H1 (cell line): ENCODE measurements at regions of chr5 and their contacts with region 1.

Region 1: DNA sequence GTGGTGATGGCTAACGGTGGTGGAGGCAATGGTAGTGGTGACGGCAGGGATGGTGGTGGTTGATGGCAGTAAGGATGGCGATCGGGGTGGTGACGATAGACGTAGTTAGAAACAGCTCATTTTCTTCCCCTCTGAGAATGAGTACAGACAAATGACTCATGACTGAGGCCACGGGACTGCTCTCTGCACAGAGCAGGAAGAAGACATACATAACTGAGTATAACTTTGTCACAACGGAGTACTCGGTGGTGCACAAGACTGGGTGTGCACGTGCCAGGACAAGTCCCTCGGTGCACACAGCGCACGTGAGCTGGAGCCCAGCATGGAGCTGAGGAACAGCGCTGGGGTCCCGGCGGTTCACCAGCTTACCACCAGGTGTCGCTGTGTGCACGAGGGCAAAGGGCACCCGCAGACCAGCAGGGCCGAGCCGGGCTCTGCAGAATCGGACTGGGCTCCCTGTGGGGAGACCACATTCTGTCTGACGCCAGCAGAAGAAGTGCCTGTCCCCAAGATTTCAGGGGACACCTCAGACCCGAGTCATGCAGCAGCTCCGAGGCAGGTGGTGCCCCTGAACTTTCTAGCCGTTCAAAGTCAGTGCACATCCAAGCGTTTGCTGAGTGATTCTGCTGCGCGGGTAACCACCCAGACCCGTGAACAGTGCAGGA is 188.6 kb downstream of the FSTL4 start:
- DNase-seq: peak; percentile 53 to 97
- H3K4me3 ChIP-seq: no peak overlapping the region
- H3K27ac ChIP-seq: no peak overlapping the region
- H3K4me1 ChIP-seq: peaks cover 8 to 27% (median 18%) of the 10 kb centered on the region in 4 experiments
- H3K27me3 ChIP-seq: peaks cover 3 to 10% (median 7%) of the 10 kb centered on the region in 4 experiments
- CTCF ChIP-seq: peak; percentile 93 to 95 (median 94)
- EP300 ChIP-seq: no peak
- POLR2A ChIP-seq: no peak
- RAD21 ChIP-seq: peak; percentile 86 to 91

Region 2: DNA sequence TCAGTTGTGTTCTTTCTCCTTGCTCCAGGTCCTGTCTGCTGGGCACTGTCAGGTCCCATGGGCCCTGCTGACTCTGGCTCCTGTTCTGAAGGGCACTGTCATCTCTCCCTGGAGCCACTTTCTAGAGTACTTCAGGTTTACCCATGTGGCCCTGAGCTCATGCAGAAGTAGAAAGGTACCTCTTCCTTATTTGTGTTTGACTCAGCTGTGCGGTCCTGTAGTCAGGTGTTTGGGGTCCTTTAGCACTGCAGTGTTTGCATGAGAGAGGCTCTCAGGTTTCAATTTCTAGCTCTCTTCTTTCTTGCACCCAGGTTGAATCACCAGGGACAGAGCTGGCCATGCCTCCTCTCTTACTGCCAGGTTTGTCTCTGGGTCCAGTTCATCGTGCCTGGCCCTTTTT is 300.5 kb before region 1 on chr5:
- CTCF ChIA-PET with region 1: no interaction called
- POLR2A ChIA-PET with region 1: no interaction called
- DNase-seq: no peak
- H3K4me3 ChIP-seq: no peak overlapping the region
- H3K27ac ChIP-seq: no peak overlapping the region
- H3K4me1 ChIP-seq: no peaks in the 10 kb centered on the region
- H3K27me3 ChIP-seq: peaks cover 0 to 2% (median under 1%) of the 10 kb centered on the region in 4 experiments; a peak in 1 of 7 replicates
- CTCF ChIP-seq: no peak
- EP300 ChIP-seq: no peak
- POLR2A ChIP-seq: no peak
- RAD21 ChIP-seq: no peak

Region 3: DNA sequence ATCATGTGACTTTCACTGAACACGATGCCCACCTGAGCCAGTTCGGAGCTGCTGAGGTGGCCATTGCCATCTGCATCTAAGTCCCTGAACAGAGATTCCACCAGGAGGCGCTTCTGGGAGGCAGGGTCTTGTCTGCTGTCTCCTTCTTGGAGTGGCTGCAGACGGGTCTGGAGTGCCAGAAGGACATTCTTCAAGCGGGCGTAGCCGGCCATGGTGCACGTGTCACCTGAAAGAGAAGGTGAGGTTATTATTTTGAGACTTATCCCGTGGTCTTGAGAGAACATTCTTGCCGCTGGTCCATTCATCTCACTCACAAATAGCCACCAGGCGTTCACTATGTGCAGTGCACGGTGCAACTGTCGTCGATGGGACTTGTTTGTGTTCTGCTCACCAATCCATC is 107.3 kb before region 1 on chr5:
- CTCF ChIA-PET with region 1: interaction called, 22 read pairs
- POLR2A ChIA-PET with region 1: no interaction called
- DNase-seq: peak; percentile 29 to 74
- H3K4me3 ChIP-seq: no peak overlapping the region
- H3K27ac ChIP-seq: no peak overlapping the region
- H3K4me1 ChIP-seq: peaks cover 5 to 11% (median 9%) of the 10 kb centered on the region in 4 experiments
- H3K27me3 ChIP-seq: no peaks in the 10 kb centered on the region
- CTCF ChIP-seq: peak in 2 of 3 experiments; percentile 70 to 76; a peak in 3 of 4 replicates
- EP300 ChIP-seq: no peak
- POLR2A ChIP-seq: no peak
- RAD21 ChIP-seq: peak; percentile 60 to 77

Region 4: DNA sequence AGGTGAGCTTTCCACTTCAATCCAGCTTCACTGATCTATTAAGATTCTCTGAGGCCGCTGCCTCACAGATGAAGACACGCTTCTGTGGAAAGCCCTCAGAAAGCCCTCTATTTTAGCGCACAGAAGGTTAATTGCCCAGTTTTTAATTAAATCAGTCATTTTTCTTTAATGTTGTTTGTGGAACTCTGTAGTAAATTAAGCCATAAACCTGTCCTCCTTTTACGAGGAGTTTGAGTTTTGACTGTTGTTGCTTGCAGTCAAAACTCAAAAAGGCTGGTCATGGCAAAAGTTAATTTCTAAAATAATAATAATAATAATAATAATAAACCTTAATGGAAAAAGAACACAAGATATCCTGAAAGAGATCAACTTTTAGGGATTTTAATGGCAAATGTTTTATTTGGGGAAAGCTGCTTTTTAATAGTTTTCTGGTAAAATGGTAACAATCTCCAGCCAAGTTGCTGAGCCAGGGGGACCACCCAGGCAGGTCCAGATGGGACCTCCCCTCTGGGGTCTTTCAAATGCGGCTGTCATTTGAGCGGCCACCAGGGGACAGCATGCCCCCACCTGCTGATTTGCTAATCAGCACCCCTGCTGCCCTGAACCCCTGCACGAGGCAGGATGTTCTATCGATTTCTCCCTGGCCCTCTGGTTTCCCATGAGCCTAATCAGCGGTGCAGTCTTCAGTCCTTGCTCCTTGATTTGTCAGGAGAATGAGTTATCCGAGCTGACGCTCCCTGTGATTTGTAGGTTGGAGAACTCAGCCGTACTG is 58.6 kb before region 1 on chr5:
- CTCF ChIA-PET with region 1: interaction called, 32 read pairs
- POLR2A ChIA-PET with region 1: no interaction called
- DNase-seq: peak; percentile 36 to 64
- H3K4me3 ChIP-seq: no peak overlapping the region
- H3K27ac ChIP-seq: no peak overlapping the region
- H3K4me1 ChIP-seq: peaks cover 5 to 23% (median 13%) of the 10 kb centered on the region in 4 experiments
- H3K27me3 ChIP-seq: no peaks in the 10 kb centered on the region; a peak in 3 of 7 replicates
- CTCF ChIP-seq: peak; percentile 51 to 65 (median 64)
- EP300 ChIP-seq: no peak
- POLR2A ChIP-seq: no peak
- RAD21 ChIP-seq: peak; percentile 62 to 73

Region 5: DNA sequence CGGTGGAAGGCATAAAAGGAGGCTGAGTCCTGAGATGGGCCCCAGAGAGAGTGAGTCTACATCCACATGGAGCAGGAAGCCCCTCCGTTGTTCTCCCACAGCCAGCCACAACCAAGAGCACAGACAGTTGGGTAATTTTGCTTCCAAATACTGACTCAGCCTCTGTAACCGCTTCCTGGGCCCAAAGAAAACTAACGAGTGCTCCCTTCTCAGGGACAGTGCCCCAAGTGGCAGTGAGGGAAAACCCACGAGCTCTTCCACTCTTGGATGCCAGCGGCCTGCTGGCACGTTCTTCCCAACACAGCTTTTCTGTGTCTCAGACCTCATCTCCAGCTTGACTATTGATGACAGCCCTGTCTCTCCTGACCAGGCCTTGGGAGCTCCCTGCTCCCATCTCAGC is 19.0 kb before region 1 on chr5:
- CTCF ChIA-PET with region 1: interaction called, 122 read pairs
- POLR2A ChIA-PET with region 1: interaction called, 3 read pairs
- DNase-seq: peak in 1 of 2 experiments; percentile 49
- H3K4me3 ChIP-seq: no peak overlapping the region
- H3K27ac ChIP-seq: no peak overlapping the region
- H3K4me1 ChIP-seq: peaks cover 1 to 13% (median 7%) of the 10 kb centered on the region in 4 experiments; a peak in 5 of 7 replicates
- H3K27me3 ChIP-seq: no peaks in the 10 kb centered on the region
- CTCF ChIP-seq: peak; percentile 47 to 67 (median 52)
- EP300 ChIP-seq: no peak
- POLR2A ChIP-seq: no peak
- RAD21 ChIP-seq: peak; percentile 17 to 44; a peak in 3 of 4 replicates

Region 6: GRCh38 chr5:133450286-133450685 is 26.5 kb after region 1 on chr5:
- CTCF ChIA-PET with region 1: interaction called, 218 read pairs
- POLR2A ChIA-PET with region 1: no interaction called
- DNase-seq: no peak
- H3K4me3 ChIP-seq: no peak overlapping the region
- H3K27ac ChIP-seq: no peak overlapping the region
- H3K4me1 ChIP-seq: no peaks in the 10 kb centered on the region
- H3K27me3 ChIP-seq: no peaks in the 10 kb centered on the region
- CTCF ChIP-seq: no peak
- EP300 ChIP-seq: no peak
- POLR2A ChIP-seq: no peak
- RAD21 ChIP-seq: no peak

Region 7: GRCh38 chr5:133474851-133475590 is 51.3 kb after region 1 on chr5:
- CTCF ChIA-PET with region 1: interaction called, 13 read pairs
- POLR2A ChIA-PET with region 1: no interaction called
- DNase-seq: no peak
- H3K4me3 ChIP-seq: no peak overlapping the region
- H3K27ac ChIP-seq: no peak overlapping the region
- H3K4me1 ChIP-seq: 0 out of 7 replicates have a peak, but pooled peaks cover 0 to under 1% (median 0%) of the 10 kb centered on the region in 4 experiments
- H3K27me3 ChIP-seq: no peaks in the 10 kb centered on the region; a peak in 1 of 7 replicates
- CTCF ChIP-seq: no peak
- EP300 ChIP-seq: no peak
- POLR2A ChIP-seq: no peak
- RAD21 ChIP-seq: no peak

Region 8: DNA sequence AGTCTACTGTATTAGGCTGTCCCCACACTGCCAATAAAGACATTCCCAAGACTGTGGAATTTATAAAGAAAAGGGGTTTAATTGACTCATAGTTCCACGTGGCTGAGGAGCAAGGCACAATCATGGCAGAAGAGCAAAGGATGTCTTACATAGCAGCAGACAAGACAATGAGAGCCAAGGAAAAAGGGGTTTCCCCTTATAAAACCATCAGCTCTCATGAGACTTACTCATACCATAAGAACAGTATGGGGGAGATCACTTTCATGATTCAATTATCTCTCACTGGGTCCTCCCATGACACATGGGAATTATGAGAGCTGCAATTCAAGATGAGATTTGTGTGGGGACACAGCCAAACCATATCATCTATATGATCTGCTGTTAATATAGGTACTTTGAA is 203.4 kb after region 1 on chr5:
- CTCF ChIA-PET with region 1: no interaction called
- POLR2A ChIA-PET with region 1: no interaction called
- DNase-seq: no peak
- H3K4me3 ChIP-seq: no peak overlapping the region
- H3K27ac ChIP-seq: no peak overlapping the region
- H3K4me1 ChIP-seq: no peaks in the 10 kb centered on the region
- H3K27me3 ChIP-seq: no peaks in the 10 kb centered on the region
- CTCF ChIP-seq: no peak
- EP300 ChIP-seq: no peak
- POLR2A ChIP-seq: no peak
- RAD21 ChIP-seq: no peak

Region 9: GRCh38 chr5:133754575-133755169 is 330.9 kb after region 1 on chr5:
- CTCF ChIA-PET with region 1: interaction called, 11 read pairs
- POLR2A ChIA-PET with region 1: no interaction called
- DNase-seq: peak; percentile 9 to 54
- H3K4me3 ChIP-seq: no peak overlapping the region
- H3K27ac ChIP-seq: no peak overlapping the region
- H3K4me1 ChIP-seq: no peaks in the 10 kb centered on the region
- H3K27me3 ChIP-seq: peaks cover 0 to 6% (median 0%) of the 10 kb centered on the region in 4 experiments; a peak in 3 of 7 replicates
- CTCF ChIP-seq: peak; percentile 75 to 95 (median 80)
- EP300 ChIP-seq: no peak
- POLR2A ChIP-seq: no peak
- RAD21 ChIP-seq: peak; percentile 70 to 75